IMR-90 (cell line): ENCODE measurements at regions of chr17 and their contacts with region 1.

Region 1: GRCh38 chr17:69523244-69523861 is 108.9 kb downstream of the MAP2K6 start:
- DNase-seq: peak; percentile 64
- ATAC-seq: peak; percentile 75
- H3K4me3 ChIP-seq: no peak overlapping the region
- H3K27ac ChIP-seq: no peak overlapping the region
- H3K4me1 ChIP-seq: no peaks in the 10 kb centered on the region
- H3K27me3 ChIP-seq: no peaks in the 10 kb centered on the region
- CTCF ChIP-seq: peak; percentile 74
- POLR2A ChIP-seq: no peak
- RAD21 ChIP-seq: peak; percentile 68

Region 2: GRCh38 chr17:69246726-69247375 is 276.5 kb before region 1 on chr17:
- CTCF ChIA-PET with region 1: interaction called, 4 read pairs
- POLR2A ChIA-PET with region 1: no interaction called
- dilution Hi-C with region 1: no loop called
- in situ Hi-C with region 1: no loop called
- intact Hi-C with region 1: loop called (anchors 5 kb)
- DNase-seq: peak; percentile 55
- ATAC-seq: peak; percentile 75
- H3K4me3 ChIP-seq: no peak overlapping the region
- H3K27ac ChIP-seq: no peak overlapping the region
- H3K4me1 ChIP-seq: no peaks in the 10 kb centered on the region
- H3K27me3 ChIP-seq: no peaks in the 10 kb centered on the region
- CTCF ChIP-seq: peak; percentile 62
- POLR2A ChIP-seq: no peak
- RAD21 ChIP-seq: peak; percentile 58

Region 3: GRCh38 chr17:69430488-69430887 is 92.9 kb before region 1 on chr17:
- CTCF ChIA-PET with region 1: no interaction called
- POLR2A ChIA-PET with region 1: no interaction called
- dilution Hi-C with region 1: no loop called
- in situ Hi-C with region 1: no loop called
- intact Hi-C with region 1: no loop called
- DNase-seq: no peak
- ATAC-seq: peak; percentile 32; the same call in 1 of the 2 replicates
- H3K4me3 ChIP-seq: no peak overlapping the region
- H3K27ac ChIP-seq: no peak overlapping the region
- H3K4me1 ChIP-seq: no peaks in the 10 kb centered on the region
- H3K27me3 ChIP-seq: no peaks in the 10 kb centered on the region
- CTCF ChIP-seq: no peak
- POLR2A ChIP-seq: no peak
- RAD21 ChIP-seq: no peak

Region 4: DNA sequence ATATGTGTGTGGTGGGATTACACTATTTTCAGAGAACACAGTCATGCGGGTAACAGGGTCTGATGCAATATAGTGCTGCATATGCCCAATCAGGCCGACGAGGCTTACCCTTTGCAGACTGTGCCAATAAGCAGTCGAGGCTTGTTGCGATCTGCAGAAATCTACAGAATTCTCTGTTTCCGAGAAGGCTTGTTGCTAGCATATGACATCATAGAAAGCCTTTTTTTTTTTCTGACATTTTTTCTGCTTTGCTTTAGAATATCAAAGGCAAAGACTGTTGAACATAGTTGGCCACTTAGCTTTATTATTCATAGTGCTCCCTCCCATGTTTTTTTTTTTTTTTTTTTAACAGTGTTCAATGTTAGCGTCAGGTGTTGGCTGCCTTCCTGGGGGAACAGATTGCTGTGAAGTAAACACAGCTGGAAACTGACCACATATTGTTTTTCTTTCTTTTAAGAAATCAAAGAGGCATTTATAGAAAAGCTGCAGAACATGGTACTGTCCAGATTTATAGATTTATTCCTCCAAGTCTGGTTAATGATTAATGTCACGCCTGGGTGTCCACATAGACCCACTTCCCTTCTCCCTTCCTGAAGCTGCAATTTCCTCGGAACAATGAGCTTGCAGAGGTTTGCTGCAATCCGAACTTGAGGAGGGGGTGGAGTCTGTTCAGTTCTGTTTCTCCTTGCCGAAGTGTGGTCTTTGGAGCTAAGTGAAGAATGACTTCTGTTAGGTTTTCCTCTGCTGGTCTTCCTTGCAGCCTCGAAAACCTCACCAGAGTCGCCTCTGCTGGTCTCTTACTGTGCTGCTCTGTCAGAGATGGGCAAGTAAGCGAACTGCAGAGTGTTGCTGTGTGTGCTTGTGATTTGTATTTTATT is 21.5 kb before region 1 on chr17:
- CTCF ChIA-PET with region 1: interaction called, 11 read pairs
- POLR2A ChIA-PET with region 1: no interaction called
- dilution Hi-C with region 1: no loop called
- in situ Hi-C with region 1: no loop called
- intact Hi-C with region 1: no loop called
- DNase-seq: peak; percentile 90
- ATAC-seq: peak; percentile 72
- H3K4me3 ChIP-seq: peak overlapping the region; percentile 2; the same call in 1 of the 2 replicates
- H3K27ac ChIP-seq: peak overlapping the region; percentile 71; the same call in 1 of the 2 replicates
- H3K4me1 ChIP-seq: peaks cover 8% of the 10 kb centered on the region; the same call in 1 of the 2 replicates
- H3K27me3 ChIP-seq: no peaks in the 10 kb centered on the region
- CTCF ChIP-seq: no peak
- POLR2A ChIP-seq: no peak
- RAD21 ChIP-seq: no peak

Region 5: GRCh38 chr17:69761751-69762321 is 238.5 kb after region 1 on chr17:
- CTCF ChIA-PET with region 1: interaction called, 3 read pairs
- POLR2A ChIA-PET with region 1: no interaction called
- dilution Hi-C with region 1: no loop called
- in situ Hi-C with region 1: no loop called
- intact Hi-C with region 1: loop called (anchors 5 kb)
- DNase-seq: peak; percentile 99
- ATAC-seq: peak; percentile 80
- H3K4me3 ChIP-seq: no peak overlapping the region
- H3K27ac ChIP-seq: peak overlapping the region; percentile 99
- H3K4me1 ChIP-seq: peaks cover 20% of the 10 kb centered on the region
- H3K27me3 ChIP-seq: no peaks in the 10 kb centered on the region
- CTCF ChIP-seq: 0 out of 2 replicates have a peak, but pooled peaks have one; percentile 4
- POLR2A ChIP-seq: no peak; the same call in 1 of the 2 replicates
- RAD21 ChIP-seq: no peak

Region 6: DNA sequence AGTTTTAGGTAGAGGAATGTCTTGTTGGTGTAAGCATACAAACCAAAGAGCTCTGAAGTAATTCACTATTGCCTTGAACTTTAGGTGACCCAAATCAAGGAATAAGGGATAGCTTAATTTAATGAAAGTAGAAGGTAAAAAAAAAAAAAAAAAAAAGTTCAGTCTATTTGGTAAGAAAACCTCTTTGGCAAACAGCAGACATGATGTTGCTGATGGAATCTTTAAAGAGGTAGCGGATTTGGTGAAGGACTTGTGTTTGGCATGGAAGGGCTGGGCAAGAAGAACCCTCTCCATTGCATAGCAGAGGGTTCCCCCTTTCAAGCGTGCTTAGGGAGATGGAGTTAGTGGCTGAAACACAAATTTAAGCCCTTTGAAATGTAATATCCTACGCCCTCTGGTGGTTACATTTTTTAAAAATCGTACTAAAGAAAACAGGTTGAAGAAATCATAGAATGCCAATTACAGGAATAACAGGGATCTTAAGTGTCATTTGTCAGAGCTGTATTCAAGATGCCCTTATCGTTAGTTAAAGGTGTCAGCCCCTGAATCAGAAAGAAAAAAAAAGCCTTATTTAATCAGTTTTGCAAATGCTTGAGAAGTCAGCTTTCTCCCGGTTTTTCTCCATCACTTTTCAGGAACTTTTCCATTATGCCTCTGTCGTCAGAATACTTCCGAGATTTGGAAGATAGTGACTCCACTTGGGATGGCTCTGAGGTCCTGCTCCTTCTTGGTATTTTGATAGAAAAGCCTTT is 1029.1 kb after region 1 on chr17:
- CTCF ChIA-PET with region 1: interaction called, 3 read pairs
- POLR2A ChIA-PET with region 1: no interaction called
- dilution Hi-C with region 1: no loop called
- in situ Hi-C with region 1: loop called (anchors 10 kb)
- intact Hi-C with region 1: loop called (anchors 10 kb)
- DNase-seq: peak; percentile 49
- ATAC-seq: peak; percentile 76
- H3K4me3 ChIP-seq: no peak overlapping the region
- H3K27ac ChIP-seq: no peak overlapping the region
- H3K4me1 ChIP-seq: no peaks in the 10 kb centered on the region; the same call in 1 of the 2 replicates
- H3K27me3 ChIP-seq: no peaks in the 10 kb centered on the region
- CTCF ChIP-seq: peak; percentile 59
- POLR2A ChIP-seq: no peak
- RAD21 ChIP-seq: peak; percentile 60